BJ (cell line): ENCODE measurements at regions of chr17 and their contacts with region 1.

Region 1: DNA sequence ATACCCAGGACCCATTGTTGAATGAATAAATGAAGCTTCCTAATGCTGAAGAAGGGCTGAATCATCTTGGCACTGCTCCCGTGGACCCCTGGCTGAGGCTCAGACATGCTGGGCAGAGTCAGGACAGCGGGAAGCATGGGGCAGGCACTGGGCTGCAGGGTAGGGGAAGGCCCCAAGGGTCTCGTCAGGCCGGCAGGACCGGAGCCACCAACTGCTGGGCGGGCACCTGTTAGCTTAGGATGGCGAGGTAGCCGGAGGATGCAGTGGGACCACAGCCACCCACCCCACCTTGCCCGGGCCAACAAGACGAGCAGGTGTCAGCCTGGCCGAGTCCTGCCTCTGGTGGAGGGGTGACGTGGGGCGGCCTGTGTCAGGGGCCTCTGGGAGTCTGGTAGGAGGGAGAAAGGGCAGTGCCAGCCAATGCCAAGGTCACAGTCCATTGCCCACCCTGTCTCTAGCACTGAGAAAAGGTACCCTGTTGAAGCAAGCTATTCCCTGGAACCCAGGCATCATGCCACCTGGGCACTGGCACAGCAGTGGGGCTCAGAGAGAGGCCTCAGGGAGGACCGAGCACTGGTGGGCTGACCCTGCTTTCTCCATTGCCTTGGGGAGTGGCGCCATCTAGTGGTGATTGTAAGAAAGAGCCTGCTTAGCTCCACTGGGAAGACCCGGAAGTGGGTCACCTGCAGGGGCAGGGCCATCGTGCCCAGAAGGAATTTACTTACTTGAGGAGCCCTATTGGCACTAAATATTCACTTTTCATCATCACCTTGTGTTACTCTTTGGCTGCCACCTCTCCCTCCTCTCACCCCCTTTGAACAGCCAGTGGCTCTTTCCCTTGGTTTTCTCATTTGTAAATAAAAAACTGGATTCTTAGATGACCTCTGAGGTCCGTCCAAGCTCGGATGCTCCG is 3.0 kb upstream of the DLX3 start:
- DNase-seq: peak; percentile 14
- H3K4me3 ChIP-seq: no peak overlapping the region
- H3K27me3 ChIP-seq: peaks cover 35% of the 10 kb centered on the region
- CTCF ChIP-seq: peak; percentile 92

Region 2: GRCh38 chr17:49845321-49845720 is 152.7 kb before region 1 on chr17:
- CTCF ChIA-PET with region 1: interaction called, 17 read pairs
- POLR2A ChIA-PET with region 1: no interaction called
- DNase-seq: no peak
- H3K4me3 ChIP-seq: no peak overlapping the region
- H3K27me3 ChIP-seq: no peaks in the 10 kb centered on the region
- CTCF ChIP-seq: no peak

Region 3: GRCh38 chr17:49880291-49881053 is 117.6 kb before region 1 on chr17:
- CTCF ChIA-PET with region 1: interaction called, 464 read pairs
- POLR2A ChIA-PET with region 1: no interaction called
- DNase-seq: no peak
- H3K4me3 ChIP-seq: no peak overlapping the region
- H3K27me3 ChIP-seq: peaks cover 35% of the 10 kb centered on the region
- CTCF ChIP-seq: peak; percentile 96

Region 4: GRCh38 chr17:49910094-49910857 is 87.8 kb before region 1 on chr17:
- CTCF ChIA-PET with region 1: interaction called, 23 read pairs
- POLR2A ChIA-PET with region 1: no interaction called
- DNase-seq: no peak
- H3K4me3 ChIP-seq: no peak overlapping the region
- H3K27me3 ChIP-seq: peaks cover 57% of the 10 kb centered on the region
- CTCF ChIP-seq: no peak

Region 5: DNA sequence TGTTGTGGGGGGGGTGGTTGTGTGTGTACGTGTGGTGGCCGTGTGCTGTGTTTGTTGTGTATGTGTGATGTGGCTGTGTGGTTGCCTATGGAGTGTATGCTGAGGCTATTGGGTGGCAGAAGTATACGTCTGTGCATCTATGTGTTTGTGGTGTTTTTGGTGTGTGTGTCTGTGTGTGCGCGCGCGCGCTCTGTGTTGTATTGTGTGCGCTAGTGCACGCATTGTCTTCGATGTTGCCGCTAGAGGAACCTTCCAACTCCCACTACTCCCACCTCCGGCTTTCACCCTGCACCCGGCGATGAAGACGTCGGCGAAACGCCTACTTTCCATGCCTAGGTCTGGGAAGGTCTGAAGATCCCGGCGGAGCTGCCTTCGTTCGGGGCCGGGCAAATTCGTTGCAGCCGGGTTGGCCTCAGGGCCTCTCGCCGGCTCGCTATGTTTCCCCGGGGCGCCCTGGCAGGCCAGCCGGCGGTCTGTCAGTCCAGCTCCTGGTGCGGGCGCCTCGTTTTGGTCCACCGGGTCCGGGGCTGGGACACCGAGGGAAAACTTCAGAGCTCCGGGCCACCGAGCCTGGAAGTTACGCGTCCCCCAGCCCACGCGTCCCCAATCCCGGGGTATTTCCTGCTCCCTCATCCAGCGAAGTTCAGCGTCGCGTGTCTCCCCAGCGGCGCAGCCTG is 34.3 kb before region 1 on chr17:
- CTCF ChIA-PET with region 1: interaction called, 13 read pairs
- POLR2A ChIA-PET with region 1: no interaction called
- DNase-seq: no peak
- H3K4me3 ChIP-seq: no peak overlapping the region
- H3K27me3 ChIP-seq: peaks cover 55% of the 10 kb centered on the region
- CTCF ChIP-seq: no peak

Region 6: DNA sequence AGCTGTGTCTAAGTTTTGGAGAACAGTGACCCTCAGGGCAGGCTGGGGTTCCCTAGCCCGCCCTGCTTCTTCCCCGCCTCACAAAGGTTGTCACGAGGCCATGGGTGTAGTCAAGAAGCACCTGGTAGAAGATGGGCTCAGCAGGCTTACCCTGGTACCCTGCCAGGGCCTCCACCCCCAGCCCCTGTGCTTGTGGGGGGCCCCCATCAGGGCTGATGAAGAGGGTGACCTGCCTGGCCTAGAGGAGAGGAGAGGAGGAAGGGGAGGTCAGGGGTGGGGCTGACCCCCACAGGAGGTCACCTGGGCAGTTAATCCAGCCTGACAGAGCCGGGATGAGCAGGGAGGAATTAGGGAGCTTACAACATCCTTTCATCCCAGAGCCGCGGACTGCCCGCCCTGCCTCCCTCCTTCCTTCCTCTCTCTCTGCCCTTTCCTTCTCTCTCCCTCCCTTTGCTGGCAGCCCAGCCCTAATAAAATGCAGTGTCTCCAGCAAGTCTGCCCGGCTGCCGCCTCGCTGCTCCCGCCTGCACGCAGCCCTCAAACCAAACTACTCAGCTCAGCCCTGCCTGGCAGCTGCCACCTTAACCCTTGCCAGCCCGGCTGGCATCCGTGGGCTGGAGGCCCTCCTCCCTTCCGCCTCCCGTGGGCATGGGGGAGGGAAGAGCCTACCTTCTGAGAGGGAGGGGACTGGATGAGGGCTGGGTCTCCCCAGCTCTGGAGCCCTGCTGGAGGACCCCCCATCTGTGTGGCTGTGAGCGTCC is 10.2 kb before region 1 on chr17:
- CTCF ChIA-PET with region 1: interaction called, 71 read pairs
- POLR2A ChIA-PET with region 1: no interaction called
- DNase-seq: no peak
- H3K4me3 ChIP-seq: no peak overlapping the region
- H3K27me3 ChIP-seq: peaks cover 18% of the 10 kb centered on the region
- CTCF ChIP-seq: no peak

Region 7: GRCh38 chr17:50264263-50265113 is 266.4 kb after region 1 on chr17:
- CTCF ChIA-PET with region 1: no interaction called
- POLR2A ChIA-PET with region 1: no interaction called
- DNase-seq: no peak
- H3K4me3 ChIP-seq: peak overlapping the region; percentile 18; the same call in 1 of the 2 replicates
- H3K27me3 ChIP-seq: no peaks in the 10 kb centered on the region
- CTCF ChIP-seq: no peak